ENCODE measurements at regions of chr7 and their contacts with region 1.

Region 1: GRCh38 chr7:154927624-154928143 is 75.2 kb downstream of the PAXIP1 start:
- DNase-seq: peak; percentile 32
- ATAC-seq: peak; percentile 59
- H3K4me3 Mint-ChIP-seq: peak overlapping the region; percentile 96
- H3K27ac Mint-ChIP-seq: peak overlapping the region; percentile 99
- H3K4me1 Mint-ChIP-seq: peaks cover 28% of the 10 kb centered on the region
- H3K27me3 Mint-ChIP-seq: no peaks in the 10 kb centered on the region
- CTCF ChIP-seq: peak; percentile 22

Region 2: GRCh38 chr7:154937837-154938236 is 10.2 kb after region 1 on chr7:
- CTCF ChIA-PET with region 1: interaction called, 10 read pairs
- POLR2A ChIA-PET with region 1: interaction called, 3 read pairs
- intact Hi-C with region 1: no loop called
- DNase-seq: no peak
- ATAC-seq: no peak
- H3K4me3 Mint-ChIP-seq: no peak overlapping the region
- H3K27ac Mint-ChIP-seq: no peak overlapping the region
- H3K4me1 Mint-ChIP-seq: peaks cover 16% of the 10 kb centered on the region
- H3K27me3 Mint-ChIP-seq: no peaks in the 10 kb centered on the region
- CTCF ChIP-seq: no peak

Region 3: GRCh38 chr7:155003376-155004214 is 75.9 kb after region 1 on chr7:
- CTCF ChIA-PET with region 1: interaction called, 31 read pairs
- POLR2A ChIA-PET with region 1: interaction called, 21 read pairs
- intact Hi-C with region 1: loop called (anchors 1 kb)
- DNase-seq: no peak
- ATAC-seq: peak; percentile 86
- H3K4me3 Mint-ChIP-seq: peak overlapping the region; percentile 92
- H3K27ac Mint-ChIP-seq: peak overlapping the region; percentile 83
- H3K4me1 Mint-ChIP-seq: peaks cover 19% of the 10 kb centered on the region
- H3K27me3 Mint-ChIP-seq: no peaks in the 10 kb centered on the region
- CTCF ChIP-seq: no peak

Region 4: DNA sequence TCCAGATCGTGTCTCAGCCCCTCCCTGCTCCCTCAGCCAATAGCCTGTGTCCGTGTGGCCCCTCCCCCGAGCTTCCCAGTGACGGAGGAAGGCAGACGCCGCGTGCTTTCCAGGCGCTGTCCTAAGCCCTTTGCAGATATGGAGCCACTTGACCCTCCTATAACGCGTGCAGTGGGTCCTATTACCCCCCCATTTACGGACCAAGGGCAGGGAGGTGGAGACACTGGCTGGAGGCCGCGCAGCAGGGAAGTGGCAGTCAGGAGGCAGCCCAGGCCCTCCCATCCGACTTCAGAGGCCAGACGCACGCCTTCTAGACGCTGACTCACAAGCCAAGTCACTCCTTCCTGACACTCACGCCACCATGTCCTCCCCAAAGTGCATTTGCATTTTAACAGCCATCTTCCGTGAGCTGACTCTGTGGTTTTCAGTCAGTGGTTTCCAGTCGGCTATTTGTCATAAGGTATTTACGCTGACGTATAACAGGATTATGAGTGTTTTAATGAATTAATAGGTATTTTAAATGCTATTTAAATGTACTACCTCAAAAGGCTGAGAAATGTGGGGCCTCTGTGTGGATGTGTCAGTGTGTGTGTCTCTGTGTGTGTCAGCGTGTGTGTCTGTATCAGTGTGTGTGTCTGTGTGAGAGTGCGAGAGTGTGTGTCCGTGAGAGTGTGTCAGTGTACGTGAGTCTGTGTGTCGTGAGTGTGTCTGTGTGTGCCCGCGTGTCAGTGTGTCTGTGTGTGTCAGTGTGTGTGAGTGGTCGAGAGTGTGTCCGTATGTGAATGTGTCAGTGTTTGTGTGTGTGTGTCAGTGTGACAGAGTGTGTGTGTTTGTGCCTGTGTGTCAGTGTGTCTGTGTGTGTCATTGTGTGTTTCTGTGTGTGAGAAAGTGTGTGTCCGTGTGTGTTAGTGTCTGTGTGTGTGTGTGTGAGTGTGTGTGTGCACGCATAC is 278.0 kb after region 1 on chr7:
- CTCF ChIA-PET with region 1: interaction called, 9 read pairs
- POLR2A ChIA-PET with region 1: interaction called, 3 read pairs
- intact Hi-C with region 1: loop called (anchors 1 kb)
- DNase-seq: peak; percentile 75
- ATAC-seq: peak; percentile 81
- H3K4me3 Mint-ChIP-seq: peak overlapping the region; percentile 82
- H3K27ac Mint-ChIP-seq: peak overlapping the region; percentile 97
- H3K4me1 Mint-ChIP-seq: peaks cover 32% of the 10 kb centered on the region
- H3K27me3 Mint-ChIP-seq: no peaks in the 10 kb centered on the region
- CTCF ChIP-seq: no peak

Region 5: DNA sequence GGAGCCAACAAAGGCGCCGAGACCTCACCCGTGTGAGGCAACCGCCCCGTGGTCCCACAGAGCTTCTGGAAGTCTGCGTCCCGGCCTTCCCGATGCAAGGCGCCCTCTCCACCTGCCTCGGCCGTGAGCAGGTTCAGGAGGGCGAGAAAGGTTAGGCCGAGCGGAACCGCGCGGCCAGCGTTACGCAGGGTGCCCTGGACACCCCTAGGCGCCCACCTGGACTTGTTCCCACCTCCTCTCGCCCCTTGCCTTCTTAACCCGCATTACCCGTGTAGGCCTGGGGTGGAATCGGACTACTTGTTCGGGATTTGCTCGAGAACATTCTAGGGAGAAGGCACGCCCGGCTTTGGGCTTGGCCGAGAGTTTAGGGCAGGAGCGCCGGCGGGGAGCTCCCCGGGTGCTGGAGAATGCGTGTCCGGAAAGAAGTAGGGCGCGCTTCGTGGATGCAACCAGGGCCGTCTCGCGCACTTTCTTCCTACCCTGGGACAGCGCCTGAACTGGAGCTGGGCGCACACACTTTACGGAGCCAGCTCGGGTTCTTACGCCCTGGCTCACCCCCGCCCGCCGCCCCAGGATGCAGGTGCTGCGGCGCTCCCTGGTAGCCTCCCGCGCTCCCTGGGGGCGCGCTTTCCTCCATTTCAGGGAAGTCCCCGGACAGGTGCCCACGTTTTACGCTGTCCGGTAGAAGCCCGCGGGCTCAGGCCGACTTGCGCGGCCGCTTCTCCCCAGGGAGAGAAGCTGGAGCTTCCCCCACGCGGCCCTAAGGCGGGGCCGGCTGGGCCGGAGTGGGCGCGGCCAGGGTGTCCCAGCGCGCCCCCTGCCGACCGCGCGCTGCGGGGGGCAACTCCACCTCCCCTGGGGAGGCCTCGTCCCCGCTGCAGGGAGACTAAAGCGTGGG is 444.4 kb after region 1 on chr7:
- CTCF ChIA-PET with region 1: interaction called, 8 read pairs
- POLR2A ChIA-PET with region 1: interaction called, 3 read pairs
- intact Hi-C with region 1: loop called (anchors 10 kb)
- DNase-seq: peak; percentile 43
- ATAC-seq: peak; percentile 70
- H3K4me3 Mint-ChIP-seq: peak overlapping the region; percentile 86
- H3K27ac Mint-ChIP-seq: no peak overlapping the region
- H3K4me1 Mint-ChIP-seq: peaks cover 38% of the 10 kb centered on the region
- H3K27me3 Mint-ChIP-seq: peaks cover 56% of the 10 kb centered on the region
- CTCF ChIP-seq: no peak

Region 6: GRCh38 chr7:155598810-155599210 is 671.1 kb after region 1 on chr7:
- CTCF ChIA-PET with region 1: interaction called, 13 read pairs
- POLR2A ChIA-PET with region 1: no interaction called
- intact Hi-C with region 1: loop called (anchors 1 kb)
- DNase-seq: peak; percentile 79
- ATAC-seq: peak; percentile 70
- H3K4me3 Mint-ChIP-seq: no peak overlapping the region
- H3K27ac Mint-ChIP-seq: no peak overlapping the region
- H3K4me1 Mint-ChIP-seq: peaks cover 3% of the 10 kb centered on the region
- H3K27me3 Mint-ChIP-seq: peaks cover 18% of the 10 kb centered on the region
- CTCF ChIP-seq: no peak

Region 7: DNA sequence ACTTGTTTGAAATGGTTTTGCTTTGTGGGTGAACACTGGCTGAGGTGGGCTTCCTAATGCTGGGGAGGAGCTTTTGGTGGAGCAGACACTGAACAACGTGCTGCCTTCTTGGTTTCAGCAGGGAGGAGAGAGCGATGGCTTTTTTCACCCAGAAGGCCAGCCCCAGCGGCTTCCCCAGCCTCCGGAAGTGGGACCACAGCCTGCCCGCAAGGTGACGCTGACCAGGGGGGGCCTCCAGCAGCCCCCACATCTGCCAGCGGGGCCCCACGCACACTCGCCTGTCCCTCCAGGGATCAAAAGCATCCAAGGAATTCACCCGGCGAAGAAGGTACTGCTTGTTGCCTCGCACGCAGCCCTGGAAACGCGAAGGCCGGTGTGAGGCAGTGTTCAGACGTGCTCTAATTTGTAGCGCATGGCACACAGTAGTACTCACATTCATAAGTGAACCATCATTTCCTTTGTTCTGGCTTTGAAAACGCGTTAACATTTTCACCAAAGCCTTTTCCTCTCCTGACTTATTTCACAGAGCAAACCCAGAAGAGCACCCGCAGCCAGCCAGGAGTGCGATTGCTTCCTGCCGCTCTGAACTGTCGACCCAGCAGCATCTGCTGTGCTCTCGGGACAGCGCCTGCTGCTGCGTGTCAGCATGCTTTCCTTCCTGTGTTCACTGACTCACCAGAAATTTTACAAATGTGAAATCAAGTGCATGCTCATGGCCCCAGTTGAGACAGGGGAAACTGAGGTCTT is 836.2 kb after region 1 on chr7:
- CTCF ChIA-PET with region 1: interaction called, 6 read pairs
- POLR2A ChIA-PET with region 1: no interaction called
- intact Hi-C with region 1: loop called (anchors 1 kb)
- DNase-seq: no peak
- ATAC-seq: peak; percentile 54
- H3K4me3 Mint-ChIP-seq: peak overlapping the region; percentile 61
- H3K27ac Mint-ChIP-seq: peak overlapping the region; percentile 85
- H3K4me1 Mint-ChIP-seq: peaks cover 38% of the 10 kb centered on the region
- H3K27me3 Mint-ChIP-seq: no peaks in the 10 kb centered on the region
- CTCF ChIP-seq: no peak